ENCODE measurements at regions of chr5 and their contacts with region 1.

Region 1: DNA sequence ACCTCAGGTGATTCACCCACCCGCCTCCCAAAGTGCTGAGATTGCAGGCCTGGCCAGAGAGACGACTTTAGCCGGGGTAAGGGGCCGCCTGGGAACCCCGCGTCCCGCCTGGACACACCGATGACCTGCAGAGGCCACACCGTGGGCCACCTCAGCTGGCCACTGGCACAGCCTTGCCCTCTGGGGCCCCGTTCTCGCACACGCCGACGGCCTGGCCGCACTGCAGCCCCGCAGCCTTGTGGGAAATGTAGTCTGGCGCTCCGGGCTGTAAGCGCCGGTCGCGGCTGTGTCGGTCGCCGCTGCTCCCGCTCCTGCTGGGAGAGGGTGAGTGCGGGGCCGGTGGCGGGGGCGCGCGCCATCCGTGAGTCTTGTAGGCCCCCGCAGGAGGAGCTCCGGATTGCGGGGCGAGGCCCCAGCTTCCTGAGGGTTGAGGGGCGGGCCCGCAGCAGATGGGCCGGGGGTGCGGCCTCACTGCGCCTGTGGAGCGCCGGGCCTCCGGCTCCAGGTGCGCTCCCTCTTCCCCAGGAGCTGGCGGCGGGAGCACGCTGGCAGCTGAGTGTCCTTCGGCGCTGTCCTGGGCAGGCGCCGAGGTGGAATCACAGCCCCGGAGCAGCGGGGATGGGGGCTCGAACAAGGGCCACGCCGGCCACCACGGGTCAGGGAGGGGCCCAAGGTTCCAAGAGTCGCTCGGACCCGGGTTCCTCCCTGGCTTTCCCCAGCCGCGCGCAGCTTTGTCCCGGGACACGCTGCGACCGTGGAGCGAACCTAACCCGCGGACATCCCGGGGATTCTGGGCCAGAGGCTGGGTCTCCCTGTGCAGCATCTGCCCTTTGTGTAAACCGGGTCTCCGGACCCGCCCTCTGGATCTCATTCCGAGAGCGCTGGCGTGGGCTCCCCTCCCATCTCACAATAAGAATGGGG is at the start of gene ZFP2:
- DNase-seq: peak; percentile 86
- total RNA-seq, gene ZFP2: 2.3 TPM

Region 2: GRCh38 chr5:180084688-180085561 is 1189.0 kb after region 1 on chr5:
- intact Hi-C with region 1: loop called in 1 of 2 experiments (anchors 10 kb)
- DNase-seq: no peak

Measured in posterior vena cava (tissue), 2 donors.